ENCODE measurements at regions of chr4 and their contacts with region 1.

Region 1: DNA sequence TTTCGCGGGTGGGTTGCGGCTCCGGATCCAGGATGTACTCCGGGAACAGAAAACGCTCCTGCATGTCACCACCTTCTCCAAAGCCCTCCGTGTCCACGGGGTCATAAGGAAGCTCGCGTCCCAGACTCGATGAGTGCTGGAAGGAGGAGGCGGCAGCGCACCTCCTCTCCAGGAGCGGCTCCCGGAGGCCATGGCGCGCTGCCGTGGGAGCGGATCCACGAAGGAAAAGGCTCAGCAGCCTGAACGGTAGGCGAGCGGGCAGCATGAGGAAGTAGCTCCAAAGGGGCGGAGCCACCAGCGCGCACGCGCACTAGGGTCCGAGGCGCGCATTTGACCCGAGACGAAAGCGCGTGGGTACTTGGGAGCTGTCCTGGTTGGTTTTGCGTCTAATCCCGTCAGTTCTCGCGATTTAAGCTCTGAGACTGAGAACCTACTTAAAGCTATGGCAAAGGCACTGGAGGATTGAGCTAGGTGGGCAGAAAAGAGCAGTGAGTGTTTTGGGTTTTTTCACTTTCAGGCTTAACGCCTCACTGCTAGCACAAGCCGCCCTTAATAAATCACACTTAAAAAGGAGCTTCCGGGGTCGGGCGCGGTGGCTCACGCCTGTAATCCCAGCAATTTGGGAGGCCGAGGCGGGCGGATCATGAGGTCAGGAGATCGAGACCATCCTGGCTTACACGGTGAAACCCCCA is at the start of gene NOA1:
- DNase-seq: peak; percentile 88 to 99 (median 90)
- ATAC-seq: peak; percentile 78
- H3K4me3 ChIP-seq: peak within 1 kb of the TSS; percentile 98
- H3K27ac ChIP-seq: peak within 1 kb of the TSS; percentile 94
- H3K4me1 ChIP-seq: peaks cover 23 to 36% of the 10 kb centered on the region in 2 experiments; a peak in 4 of 5 replicates
- H3K27me3 ChIP-seq: no peaks in the 10 kb centered on the region
- CTCF ChIP-seq: no peak
- EP300 ChIP-seq: no peak
- POLR2A ChIP-seq: peak; percentile 97
- RAD21 ChIP-seq: no peak
- polyA plus RNA-seq, gene NOA1: 2.6 to 3.9 TPM

Region 2: DNA sequence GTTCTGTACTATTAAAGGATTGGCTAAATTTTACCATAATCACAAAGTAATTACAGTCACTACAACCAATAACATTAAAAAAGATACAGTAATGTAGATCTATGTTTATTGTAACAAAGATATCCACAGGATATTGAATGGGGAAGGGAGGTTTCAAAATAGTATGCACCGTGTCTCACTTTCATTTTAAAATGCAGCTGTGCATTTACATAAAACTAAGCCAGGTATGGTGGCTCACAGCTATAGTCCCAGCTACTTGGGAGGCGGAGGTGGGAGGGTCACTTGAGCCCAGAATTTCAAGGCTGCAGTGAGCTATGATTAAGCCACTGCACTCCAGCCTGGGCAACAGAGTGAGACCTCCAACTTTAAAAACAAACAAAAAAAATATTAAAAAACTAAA is 501.6 kb before region 1 on chr4:
- CTCF ChIA-PET with region 1: no interaction called
- POLR2A ChIA-PET with region 1: no interaction called
- in situ Hi-C with region 1: no loop called
- intact Hi-C with region 1: no loop called
- DNase-seq: no peak
- ATAC-seq: peak; percentile 43; the same call in 2 of the 3 replicates
- H3K4me3 ChIP-seq: no peak overlapping the region
- H3K27ac ChIP-seq: no peak overlapping the region
- H3K4me1 ChIP-seq: peaks cover 0 to 4% of the 10 kb centered on the region in 2 experiments; a peak in 2 of 5 replicates
- H3K27me3 ChIP-seq: no peaks in the 10 kb centered on the region
- CTCF ChIP-seq: no peak
- EP300 ChIP-seq: no peak
- POLR2A ChIP-seq: no peak
- RAD21 ChIP-seq: no peak

Region 3: GRCh38 chr4:56907489-56908205 is 69.8 kb before region 1 on chr4 and contains the start of gene REST:
- CTCF ChIA-PET with region 1: no interaction called
- POLR2A ChIA-PET with region 1: interaction called, 18 read pairs
- in situ Hi-C with region 1: no loop called
- intact Hi-C with region 1: loop called (anchors 5 kb)
- DNase-seq: peak; percentile 81 to 88 (median 86)
- ATAC-seq: peak; percentile 58
- H3K4me3 ChIP-seq: peak within 1 kb of the TSS; percentile 99
- H3K27ac ChIP-seq: peak within 1 kb of the TSS; percentile 97
- H3K4me1 ChIP-seq: peaks cover 16 to 18% of the 10 kb centered on the region in 2 experiments; a peak in 4 of 5 replicates
- H3K27me3 ChIP-seq: peaks cover 2 to 13% of the 10 kb centered on the region in 2 experiments; a peak in 4 of 5 replicates
- CTCF ChIP-seq: no peak
- EP300 ChIP-seq: no peak
- POLR2A ChIP-seq: no peak
- RAD21 ChIP-seq: no peak
- polyA plus RNA-seq, gene REST: 2.9 to 6.9 TPM

Region 4: DNA sequence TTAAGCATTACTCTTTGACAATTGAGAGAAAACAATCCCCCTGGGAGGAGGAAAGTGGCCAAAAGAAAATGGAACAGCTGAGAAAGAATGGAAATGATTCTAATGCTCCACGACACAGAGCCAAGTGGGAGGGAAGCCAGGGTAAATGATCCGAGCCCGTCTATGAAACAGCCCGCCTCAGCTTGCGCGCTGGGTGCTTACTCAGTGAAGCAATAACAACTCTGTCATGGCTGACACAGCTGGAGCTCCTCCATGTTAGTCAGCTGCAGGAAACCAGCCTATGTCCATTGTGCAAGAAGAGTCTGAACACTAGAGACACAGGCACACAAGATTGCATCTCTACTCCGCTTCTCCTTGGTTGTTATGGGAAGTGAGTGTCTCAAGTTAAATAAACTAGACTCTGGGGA is 19.4 kb before region 1 on chr4:
- CTCF ChIA-PET with region 1: no interaction called
- POLR2A ChIA-PET with region 1: interaction called, 25 read pairs
- in situ Hi-C with region 1: no loop called
- intact Hi-C with region 1: no loop called
- DNase-seq: peak in 3 of 4 experiments; percentile 11 to 48 (median 35)
- ATAC-seq: peak; percentile 82
- H3K4me3 ChIP-seq: no peak overlapping the region
- H3K27ac ChIP-seq: no peak overlapping the region
- H3K4me1 ChIP-seq: peaks cover 0 to 11% of the 10 kb centered on the region in 2 experiments; a peak in 2 of 5 replicates
- H3K27me3 ChIP-seq: peaks cover 0 to 5% of the 10 kb centered on the region in 2 experiments; a peak in 3 of 5 replicates
- CTCF ChIP-seq: no peak
- EP300 ChIP-seq: no peak
- POLR2A ChIP-seq: no peak
- RAD21 ChIP-seq: no peak

Region 5: DNA sequence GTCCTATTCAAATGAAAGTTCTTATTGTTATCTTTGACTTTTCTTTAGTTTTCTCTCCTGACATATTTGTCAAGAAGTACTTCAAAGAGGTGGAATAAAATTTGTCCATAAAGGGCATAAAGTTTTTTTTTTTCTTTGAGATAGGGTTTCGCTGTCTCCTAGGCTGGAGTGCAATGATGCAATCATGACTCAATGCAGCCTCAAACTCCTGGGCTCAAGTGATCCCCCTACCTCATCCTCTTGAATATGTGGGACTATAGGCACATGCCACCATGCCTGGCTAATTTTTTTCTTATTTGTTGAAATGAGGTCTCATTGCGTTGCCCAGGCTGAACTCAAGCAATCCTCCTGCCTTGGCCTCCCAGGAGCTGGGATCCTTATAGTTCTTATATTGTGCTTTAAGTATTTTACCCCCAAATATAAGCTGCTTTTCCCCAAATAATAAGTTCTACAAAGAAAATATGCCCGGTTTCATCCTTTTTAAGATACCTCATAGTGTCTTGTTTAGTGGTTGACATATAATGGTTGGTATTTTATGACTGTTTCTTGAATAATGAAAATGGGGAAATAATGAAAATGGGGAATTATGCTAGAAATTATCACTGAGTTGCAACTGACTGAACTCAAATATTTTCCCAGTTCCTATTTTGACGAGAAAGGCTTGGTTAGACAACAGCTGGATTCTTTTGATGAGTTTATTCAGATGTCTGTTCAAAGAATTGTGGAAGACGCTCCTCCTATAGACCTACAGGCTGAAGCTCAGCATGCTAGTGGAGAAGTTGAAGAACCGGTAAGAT is 12.8 kb after region 1 on chr4:
- CTCF ChIA-PET with region 1: no interaction called
- POLR2A ChIA-PET with region 1: interaction called, 61 read pairs
- in situ Hi-C with region 1: no loop called
- intact Hi-C with region 1: no loop called
- DNase-seq: peak in 1 of 4 experiments; percentile 21
- ATAC-seq: peak; percentile 83
- H3K4me3 ChIP-seq: no peak overlapping the region
- H3K27ac ChIP-seq: peak overlapping the region; percentile 23; the same call in 1 of the 3 replicates
- H3K4me1 ChIP-seq: peaks cover 0 to under 1% of the 10 kb centered on the region in 2 experiments; a peak in 2 of 5 replicates
- H3K27me3 ChIP-seq: no peaks in the 10 kb centered on the region
- CTCF ChIP-seq: no peak
- EP300 ChIP-seq: peak; percentile 19; the same call in 1 of the 2 replicates
- POLR2A ChIP-seq: no peak
- RAD21 ChIP-seq: no peak

Region 6: GRCh38 chr4:57147335-57148060 is 170.0 kb after region 1 on chr4:
- CTCF ChIA-PET with region 1: no interaction called
- POLR2A ChIA-PET with region 1: no interaction called
- in situ Hi-C with region 1: no loop called
- intact Hi-C with region 1: no loop called
- DNase-seq: no peak
- ATAC-seq: no peak
- H3K4me3 ChIP-seq: no peak overlapping the region
- H3K27ac ChIP-seq: no peak overlapping the region
- H3K4me1 ChIP-seq: no peaks in the 10 kb centered on the region
- H3K27me3 ChIP-seq: no peaks in the 10 kb centered on the region
- CTCF ChIP-seq: no peak
- EP300 ChIP-seq: no peak
- POLR2A ChIP-seq: no peak
- RAD21 ChIP-seq: no peak